GM12878 (cell line): ENCODE measurements at regions of chr7 and their contacts with region 1.

Region 1: DNA sequence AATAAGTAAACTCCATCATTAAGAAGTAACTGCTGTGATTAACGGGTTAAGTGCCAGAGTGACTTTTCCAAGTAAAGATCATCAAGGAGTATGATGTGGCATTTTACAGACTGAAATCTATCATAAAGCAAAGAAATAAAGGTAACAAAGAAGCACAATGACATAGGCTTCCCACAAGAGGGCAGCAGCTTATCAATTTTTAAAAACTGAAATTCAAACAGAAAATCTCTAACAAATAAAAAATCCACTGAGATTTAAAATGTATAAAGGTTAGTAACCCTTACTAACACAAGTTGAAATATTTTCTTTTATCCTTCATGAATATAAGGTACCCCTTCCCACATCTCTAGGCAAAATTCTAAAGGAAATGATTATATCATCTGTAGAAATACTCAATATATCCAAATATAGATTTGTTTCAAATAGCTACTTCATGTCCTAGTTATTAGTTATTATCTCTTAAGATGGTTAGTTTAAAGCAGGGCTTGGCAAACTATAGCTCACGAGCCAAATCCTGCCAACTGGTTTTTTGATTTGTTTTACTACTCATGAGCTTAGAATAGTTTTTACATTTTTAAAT is 29.2 kb downstream of the FAM3C start:
- DNase-seq: no peak
- ATAC-seq: peak; percentile 28; the same call in 2 of the 3 replicates
- H3K4me3 ChIP-seq: no peak overlapping the region
- H3K27ac ChIP-seq: no peak overlapping the region
- H3K4me1 ChIP-seq: peaks cover 15% of the 10 kb centered on the region
- H3K27me3 ChIP-seq: no peaks in the 10 kb centered on the region
- CTCF ChIP-seq: peak; percentile 50 to 66 (median 66)
- EP300 ChIP-seq: no peak
- POLR2A ChIP-seq: no peak
- RAD21 ChIP-seq: peak; percentile 86

Region 2: DNA sequence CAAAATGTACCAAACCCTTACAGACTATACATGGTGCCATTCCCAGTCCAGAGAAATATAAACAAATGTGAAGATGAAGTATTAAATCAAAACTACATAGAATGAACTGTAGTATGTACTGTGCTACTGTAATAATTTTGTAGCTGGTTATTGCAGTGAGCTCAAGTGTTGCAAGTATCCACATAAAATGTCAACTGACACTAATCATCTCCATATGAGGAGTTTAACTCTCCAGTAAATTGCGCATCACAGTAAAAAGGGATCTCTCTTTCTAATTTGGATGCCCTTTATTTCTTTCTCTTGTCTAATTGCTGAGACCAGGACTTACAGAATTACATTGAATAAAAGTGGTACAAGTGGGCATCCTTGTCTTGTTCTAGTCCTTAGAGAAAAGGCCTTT is 212.9 kb before region 1 on chr7:
- CTCF ChIA-PET with region 1: no interaction called
- POLR2A ChIA-PET with region 1: no interaction called
- RAD21 ChIA-PET with region 1: no interaction called
- SMC1A ChIA-PET with region 1: no interaction called
- in situ Hi-C with region 1: no loop called
- intact Hi-C with region 1: no loop called
- DNase-seq: no peak
- ATAC-seq: no peak
- H3K4me3 ChIP-seq: no peak overlapping the region
- H3K27ac ChIP-seq: no peak overlapping the region
- H3K4me1 ChIP-seq: no peaks in the 10 kb centered on the region
- H3K27me3 ChIP-seq: no peaks in the 10 kb centered on the region
- CTCF ChIP-seq: no peak
- EP300 ChIP-seq: no peak
- POLR2A ChIP-seq: no peak
- RAD21 ChIP-seq: no peak

Region 3: GRCh38 chr7:121351679-121352078 is 15.3 kb before region 1 on chr7:
- CTCF ChIA-PET with region 1: interaction called, 19 read pairs
- POLR2A ChIA-PET with region 1: no interaction called
- RAD21 ChIA-PET with region 1: interaction called, 5 read pairs
- SMC1A ChIA-PET with region 1: interaction called, 23 read pairs
- in situ Hi-C with region 1: no loop called
- intact Hi-C with region 1: no loop called
- DNase-seq: no peak
- ATAC-seq: peak; percentile 52
- H3K4me3 ChIP-seq: no peak overlapping the region
- H3K27ac ChIP-seq: no peak overlapping the region
- H3K4me1 ChIP-seq: no peaks in the 10 kb centered on the region
- H3K27me3 ChIP-seq: no peaks in the 10 kb centered on the region
- CTCF ChIP-seq: no peak
- EP300 ChIP-seq: no peak
- POLR2A ChIP-seq: no peak
- RAD21 ChIP-seq: no peak

Region 4: GRCh38 chr7:121385800-121386179 is 18.8 kb after region 1 on chr7:
- CTCF ChIA-PET with region 1: interaction called, 87 read pairs
- POLR2A ChIA-PET with region 1: interaction called, 81 read pairs
- RAD21 ChIA-PET with region 1: interaction called, 272 read pairs
- SMC1A ChIA-PET with region 1: interaction called, 281 read pairs
- in situ Hi-C with region 1: no loop called
- intact Hi-C with region 1: no loop called
- DNase-seq: peak; percentile 76
- ATAC-seq: peak; percentile 79
- H3K4me3 ChIP-seq: no peak overlapping the region
- H3K27ac ChIP-seq: peak overlapping the region; percentile 92
- H3K4me1 ChIP-seq: peaks cover 43% of the 10 kb centered on the region
- H3K27me3 ChIP-seq: no peaks in the 10 kb centered on the region
- CTCF ChIP-seq: no peak
- EP300 ChIP-seq: peak; percentile 87 to 94; a peak in 3 of 4 replicates
- POLR2A ChIP-seq: no peak
- RAD21 ChIP-seq: no peak

Region 5: GRCh38 chr7:121401896-121402295 is 35.0 kb after region 1 on chr7:
- CTCF ChIA-PET with region 1: interaction called, 166 read pairs
- POLR2A ChIA-PET with region 1: interaction called, 52 read pairs
- RAD21 ChIA-PET with region 1: interaction called, 208 read pairs
- SMC1A ChIA-PET with region 1: interaction called, 135 read pairs
- in situ Hi-C with region 1: no loop called
- intact Hi-C with region 1: no loop called
- DNase-seq: no peak
- ATAC-seq: no peak
- H3K4me3 ChIP-seq: no peak overlapping the region
- H3K27ac ChIP-seq: no peak overlapping the region
- H3K4me1 ChIP-seq: no peaks in the 10 kb centered on the region
- H3K27me3 ChIP-seq: no peaks in the 10 kb centered on the region
- CTCF ChIP-seq: no peak
- EP300 ChIP-seq: no peak
- POLR2A ChIP-seq: no peak
- RAD21 ChIP-seq: no peak

Region 6: GRCh38 chr7:121440857-121441503 is 74.0 kb after region 1 on chr7:
- CTCF ChIA-PET with region 1: interaction called, 4 read pairs
- POLR2A ChIA-PET with region 1: no interaction called
- RAD21 ChIA-PET with region 1: interaction called, 11 read pairs
- SMC1A ChIA-PET with region 1: interaction called, 14 read pairs
- in situ Hi-C with region 1: no loop called
- intact Hi-C with region 1: loop called (anchors 2 kb)
- DNase-seq: no peak
- ATAC-seq: peak; percentile 43
- H3K4me3 ChIP-seq: peak overlapping the region; percentile 31; the same call in 1 of the 2 replicates
- H3K27ac ChIP-seq: peak overlapping the region; percentile 58
- H3K4me1 ChIP-seq: 0 out of 2 replicates have a peak, but pooled peaks cover 7% of the 10 kb centered on the region
- H3K27me3 ChIP-seq: no peaks in the 10 kb centered on the region
- CTCF ChIP-seq: no peak
- EP300 ChIP-seq: no peak
- POLR2A ChIP-seq: no peak
- RAD21 ChIP-seq: no peak

Region 7: DNA sequence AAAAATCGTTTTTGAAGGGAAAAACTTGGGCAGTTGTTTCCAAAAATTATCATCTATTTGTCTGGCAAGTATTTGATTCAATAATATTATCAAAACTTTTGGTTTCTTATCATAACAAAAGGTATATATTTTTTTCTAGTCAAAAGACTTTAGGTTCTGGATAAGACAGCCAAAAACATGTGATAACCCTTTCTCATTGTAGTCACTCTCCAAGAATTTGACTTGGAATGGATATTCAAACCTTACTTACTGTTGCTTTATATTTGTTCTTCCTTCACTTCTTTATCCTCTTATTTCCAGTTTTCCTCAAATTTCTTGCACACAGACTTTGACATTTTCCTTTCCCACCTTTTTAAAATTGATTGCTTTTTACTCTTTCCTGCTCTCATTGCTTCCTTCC is 170.1 kb after region 1 on chr7:
- CTCF ChIA-PET with region 1: interaction called, 20 read pairs
- POLR2A ChIA-PET with region 1: no interaction called
- RAD21 ChIA-PET with region 1: interaction called, 14 read pairs
- SMC1A ChIA-PET with region 1: interaction called, 17 read pairs
- in situ Hi-C with region 1: no loop called
- intact Hi-C with region 1: no loop called
- DNase-seq: no peak
- ATAC-seq: no peak
- H3K4me3 ChIP-seq: no peak overlapping the region
- H3K27ac ChIP-seq: no peak overlapping the region
- H3K4me1 ChIP-seq: no peaks in the 10 kb centered on the region
- H3K27me3 ChIP-seq: no peaks in the 10 kb centered on the region
- CTCF ChIP-seq: no peak
- EP300 ChIP-seq: no peak
- POLR2A ChIP-seq: no peak
- RAD21 ChIP-seq: no peak

Region 8: DNA sequence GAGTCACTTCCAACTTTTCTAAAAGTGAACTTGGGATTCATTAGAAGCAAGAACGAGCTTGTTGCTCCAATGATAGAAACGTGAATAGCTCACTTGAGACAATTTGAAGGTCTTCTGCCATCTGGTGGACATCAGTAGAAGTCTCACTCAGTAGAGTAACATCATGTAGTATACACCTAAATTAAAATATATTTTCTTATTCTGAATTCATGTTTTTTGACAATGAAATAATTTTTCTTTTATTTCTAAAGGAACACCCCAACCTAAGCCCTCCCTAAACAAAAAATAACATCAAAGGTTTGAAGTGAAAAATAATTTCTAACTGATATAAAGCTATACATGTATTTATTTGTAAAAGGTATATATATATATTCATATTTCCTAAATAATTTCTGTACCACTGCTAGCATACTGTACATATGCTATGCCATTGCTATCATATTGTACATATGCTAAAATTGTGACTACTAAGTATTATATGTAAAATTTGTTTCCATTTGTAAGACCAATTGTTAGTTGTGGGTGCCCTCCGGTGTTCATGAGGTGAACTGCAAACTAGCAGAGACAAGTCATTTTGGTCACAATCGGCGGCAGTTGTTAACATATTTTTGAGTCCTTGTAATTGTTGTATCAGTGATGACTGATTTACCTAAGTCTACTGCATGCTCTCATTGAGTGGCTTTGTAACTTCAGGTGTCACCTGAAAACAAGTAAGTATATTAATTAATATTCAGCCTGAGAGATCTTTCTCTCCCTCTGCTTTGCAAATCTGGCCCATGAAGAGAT is 627.9 kb after region 1 on chr7:
- CTCF ChIA-PET with region 1: interaction called, 24 read pairs
- POLR2A ChIA-PET with region 1: no interaction called
- RAD21 ChIA-PET with region 1: interaction called, 12 read pairs
- SMC1A ChIA-PET with region 1: interaction called, 14 read pairs
- in situ Hi-C with region 1: loop called (anchors 10 kb)
- intact Hi-C with region 1: loop called (anchors 2 kb)
- DNase-seq: no peak
- ATAC-seq: peak; percentile 98
- H3K4me3 ChIP-seq: no peak overlapping the region
- H3K27ac ChIP-seq: no peak overlapping the region
- H3K4me1 ChIP-seq: no peaks in the 10 kb centered on the region
- H3K27me3 ChIP-seq: no peaks in the 10 kb centered on the region
- CTCF ChIP-seq: peak; percentile 69 to 84 (median 73)
- EP300 ChIP-seq: no peak
- POLR2A ChIP-seq: no peak
- RAD21 ChIP-seq: peak; percentile 88